ENCODE measurements at regions of chr1 and their contacts with region 1.

Region 1: GRCh38 chr1:26602378-26602959 is 72.9 kb downstream of the RPS6KA1 start:
- DNase-seq: no peak
- ATAC-seq: peak; percentile 64
- H3K4me3 ChIP-seq: no peak overlapping the region
- H3K27ac ChIP-seq: no peak overlapping the region
- H3K4me1 ChIP-seq: peaks cover 10% of the 10 kb centered on the region
- H3K27me3 ChIP-seq: no peaks in the 10 kb centered on the region
- CTCF ChIP-seq: peak; percentile 77 to 86 (median 79)
- EP300 ChIP-seq: no peak
- POLR2A ChIP-seq: no peak
- RAD21 ChIP-seq: peak; percentile 99

Region 2: DNA sequence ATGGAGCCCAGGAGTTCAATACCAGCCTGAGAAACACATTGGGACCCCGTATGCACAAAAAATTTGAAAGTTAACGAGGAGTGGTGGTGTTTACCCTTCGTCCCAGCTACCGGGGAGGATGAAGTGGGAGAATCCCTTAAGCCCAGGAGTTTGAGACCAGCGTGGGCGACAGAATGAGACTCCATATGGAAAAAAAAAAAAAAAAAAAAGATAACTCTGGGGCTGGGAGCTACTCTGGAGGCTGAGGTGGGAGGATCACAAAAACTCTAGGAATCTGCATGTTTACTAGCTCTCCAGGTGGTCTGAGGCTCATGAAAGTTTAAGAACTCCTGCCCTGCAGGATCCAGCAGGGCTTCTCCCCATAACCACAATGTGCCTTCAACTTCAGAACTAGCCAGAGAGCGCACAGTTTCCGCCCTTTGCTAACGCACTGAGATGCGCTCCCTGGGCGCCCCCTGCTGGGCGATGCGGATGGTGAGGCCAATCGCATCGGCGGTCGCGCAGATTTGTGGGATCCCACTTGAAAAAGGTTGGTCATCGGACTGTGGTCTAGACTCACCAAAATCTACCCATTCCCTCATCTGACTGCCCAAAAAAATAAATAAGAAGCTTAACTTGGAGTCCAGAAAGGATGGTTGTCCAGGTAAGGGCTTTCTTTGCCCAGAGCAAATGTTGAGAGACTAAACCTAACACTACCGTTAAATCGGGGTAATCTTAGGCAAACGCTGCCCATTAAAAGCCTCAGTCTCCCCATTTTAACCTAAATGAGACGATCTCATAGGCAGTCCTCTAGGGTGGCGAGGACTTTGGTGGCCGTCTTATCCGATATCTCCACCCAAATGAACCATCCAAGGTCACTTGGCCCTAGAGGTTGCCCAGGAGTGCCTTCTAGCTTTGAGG is 238.7 kb before region 1 on chr1:
- CTCF ChIA-PET with region 1: no interaction called
- POLR2A ChIA-PET with region 1: no interaction called
- RAD21 ChIA-PET with region 1: no interaction called
- SMC1A ChIA-PET with region 1: no interaction called
- in situ Hi-C with region 1: no loop called
- intact Hi-C with region 1: no loop called
- DNase-seq: peak; percentile 16
- ATAC-seq: peak; percentile 91
- H3K4me3 ChIP-seq: no peak overlapping the region
- H3K27ac ChIP-seq: no peak overlapping the region
- H3K4me1 ChIP-seq: no peaks in the 10 kb centered on the region; the same call in 1 of the 2 replicates
- H3K27me3 ChIP-seq: peaks cover 3 to 5% of the 10 kb centered on the region in 2 experiments; a peak in 3 of 4 replicates
- CTCF ChIP-seq: peak; percentile 85 to 98 (median 98)
- EP300 ChIP-seq: no peak
- POLR2A ChIP-seq: no peak
- RAD21 ChIP-seq: peak; percentile 81

Region 3: DNA sequence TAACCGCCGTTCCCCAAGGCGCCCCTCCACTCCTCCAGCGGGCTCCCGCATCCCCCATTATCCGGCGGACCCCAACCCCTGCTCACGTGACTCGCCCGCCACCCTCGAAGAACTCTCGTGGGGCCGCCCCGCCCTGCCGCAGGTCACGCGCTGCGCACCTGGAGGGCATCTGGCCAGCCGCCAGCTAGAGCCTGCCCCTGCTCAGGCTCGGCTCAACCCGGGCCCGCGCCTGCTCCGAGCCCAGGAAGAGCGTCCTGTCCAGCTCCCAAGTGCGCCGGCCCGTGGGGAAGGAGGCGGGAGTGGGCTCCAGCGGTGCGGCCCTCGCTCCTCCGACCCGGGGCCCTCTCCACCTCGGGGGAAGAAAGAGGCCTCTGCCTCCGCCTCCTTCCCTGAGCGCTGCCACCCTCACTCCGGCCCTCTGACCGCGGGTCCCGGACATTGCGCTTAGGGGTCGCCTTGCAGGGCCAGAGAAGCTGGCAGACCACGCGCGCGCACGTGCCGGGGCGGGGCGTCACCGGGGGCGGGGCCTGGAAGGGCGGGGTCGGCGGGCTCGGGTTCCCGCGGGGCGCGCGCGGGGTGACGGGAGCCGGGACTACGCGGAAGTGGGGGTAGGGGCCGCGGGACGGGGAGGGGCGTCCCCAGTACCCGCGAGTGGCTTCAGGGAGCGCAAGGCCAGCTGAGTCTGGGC is 101.8 kb before region 1 on chr1:
- CTCF ChIA-PET with region 1: interaction called, 58 read pairs
- POLR2A ChIA-PET with region 1: interaction called, 5 read pairs
- RAD21 ChIA-PET with region 1: interaction called, 33 read pairs
- SMC1A ChIA-PET with region 1: interaction called, 17 read pairs
- in situ Hi-C with region 1: no loop called
- intact Hi-C with region 1: loop called (anchors 2 kb)
- DNase-seq: peak; percentile 39
- ATAC-seq: peak; percentile 86
- H3K4me3 ChIP-seq: peak overlapping the region; percentile 89
- H3K27ac ChIP-seq: peak overlapping the region; percentile 95
- H3K4me1 ChIP-seq: peaks cover 14% of the 10 kb centered on the region
- H3K27me3 ChIP-seq: no peaks in the 10 kb centered on the region
- CTCF ChIP-seq: no peak
- EP300 ChIP-seq: peak in 1 of 2 experiments; percentile 36; a peak in 1 of 4 replicates
- POLR2A ChIP-seq: peak; percentile 97
- RAD21 ChIP-seq: no peak

Region 4: DNA sequence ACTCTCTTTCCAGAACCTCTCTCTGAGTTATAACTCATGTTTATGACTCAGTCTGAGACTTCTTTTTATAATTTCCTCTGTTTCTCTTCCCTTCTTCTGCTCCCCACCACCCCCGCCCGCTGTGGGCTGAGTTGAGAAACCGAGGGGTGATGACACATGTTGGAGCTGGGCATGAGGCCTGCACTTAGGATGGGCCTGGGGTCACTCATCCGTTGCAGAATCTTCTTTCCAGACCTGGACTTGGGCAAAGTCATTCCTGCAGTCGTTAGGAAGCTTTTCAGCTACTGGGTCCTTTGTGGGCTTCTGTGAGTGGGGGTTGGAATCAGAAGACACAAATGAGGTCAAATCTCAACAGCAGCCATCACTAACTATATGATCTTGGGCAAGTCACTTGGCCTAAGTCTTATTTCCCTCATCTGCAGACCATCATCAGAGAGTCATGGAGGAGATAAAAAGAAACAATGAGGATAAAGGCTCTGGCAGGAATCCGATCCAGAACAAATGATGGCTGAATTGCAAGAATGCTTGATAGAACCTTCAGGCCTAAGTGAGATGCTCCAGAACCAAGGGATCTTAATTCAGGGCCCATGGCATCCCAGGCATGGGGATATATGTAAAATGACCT is 19.5 kb before region 1 on chr1:
- CTCF ChIA-PET with region 1: interaction called, 13 read pairs
- POLR2A ChIA-PET with region 1: interaction called, 3 read pairs
- RAD21 ChIA-PET with region 1: interaction called, 9 read pairs
- SMC1A ChIA-PET with region 1: interaction called, 7 read pairs
- in situ Hi-C with region 1: no loop called
- intact Hi-C with region 1: no loop called
- DNase-seq: peak; percentile 56
- ATAC-seq: peak; percentile 67
- H3K4me3 ChIP-seq: no peak overlapping the region
- H3K27ac ChIP-seq: peak overlapping the region; percentile 87
- H3K4me1 ChIP-seq: peaks cover 56% of the 10 kb centered on the region
- H3K27me3 ChIP-seq: no peaks in the 10 kb centered on the region
- CTCF ChIP-seq: no peak
- EP300 ChIP-seq: peak in 1 of 2 experiments; percentile 70; a peak in 1 of 4 replicates
- POLR2A ChIP-seq: no peak
- RAD21 ChIP-seq: no peak

Region 5: DNA sequence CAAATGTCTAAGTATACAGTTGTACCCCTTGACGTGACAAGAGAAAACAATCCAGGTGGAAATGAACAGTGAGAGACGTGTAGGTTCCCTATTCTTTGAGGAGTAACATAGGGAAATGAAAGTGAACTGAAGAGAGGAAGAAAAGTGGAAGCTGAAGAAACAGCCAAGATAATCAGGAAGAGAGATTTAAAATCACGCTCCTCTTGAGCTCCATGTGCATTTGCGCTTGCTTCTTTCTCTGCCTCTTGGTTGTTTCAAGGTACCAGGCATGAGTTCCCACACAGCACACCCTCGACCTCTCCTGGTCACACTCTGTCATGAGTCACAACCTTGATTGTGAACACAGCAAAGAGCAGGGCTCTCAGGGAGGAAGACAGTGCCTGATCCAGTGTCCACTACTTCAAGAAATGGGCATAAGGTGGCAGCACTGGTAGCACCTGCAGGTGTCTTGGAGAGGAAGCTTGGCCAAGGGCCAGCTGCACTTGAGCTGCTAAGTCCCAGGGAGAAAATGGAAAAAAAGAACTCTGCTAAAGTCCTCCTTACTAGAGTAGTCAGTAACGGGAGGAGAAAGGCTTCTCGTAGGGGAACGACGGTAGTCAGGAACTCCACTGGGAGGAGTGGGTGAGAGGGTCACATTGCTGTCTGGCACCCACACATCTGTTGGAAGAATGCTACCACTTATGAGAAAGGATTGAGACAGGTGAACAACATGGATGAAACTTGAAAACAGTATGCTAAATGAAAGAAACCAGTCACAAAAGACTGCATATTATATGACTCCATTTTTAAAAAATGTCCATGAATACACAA is 75.0 kb after region 1 on chr1:
- CTCF ChIA-PET with region 1: interaction called, 83 read pairs
- POLR2A ChIA-PET with region 1: interaction called, 5 read pairs
- RAD21 ChIA-PET with region 1: interaction called, 47 read pairs
- SMC1A ChIA-PET with region 1: interaction called, 72 read pairs
- in situ Hi-C with region 1: no loop called
- intact Hi-C with region 1: loop called (anchors 1 kb)
- DNase-seq: peak; percentile 87
- ATAC-seq: peak; percentile 99
- H3K4me3 ChIP-seq: no peak overlapping the region
- H3K27ac ChIP-seq: peak overlapping the region; percentile 11; the same call in 1 of the 2 replicates
- H3K4me1 ChIP-seq: peaks cover 10% of the 10 kb centered on the region
- H3K27me3 ChIP-seq: no peaks in the 10 kb centered on the region
- CTCF ChIP-seq: peak; percentile 71 to 84 (median 73)
- EP300 ChIP-seq: no peak
- POLR2A ChIP-seq: no peak
- RAD21 ChIP-seq: peak; percentile 84

Region 6: DNA sequence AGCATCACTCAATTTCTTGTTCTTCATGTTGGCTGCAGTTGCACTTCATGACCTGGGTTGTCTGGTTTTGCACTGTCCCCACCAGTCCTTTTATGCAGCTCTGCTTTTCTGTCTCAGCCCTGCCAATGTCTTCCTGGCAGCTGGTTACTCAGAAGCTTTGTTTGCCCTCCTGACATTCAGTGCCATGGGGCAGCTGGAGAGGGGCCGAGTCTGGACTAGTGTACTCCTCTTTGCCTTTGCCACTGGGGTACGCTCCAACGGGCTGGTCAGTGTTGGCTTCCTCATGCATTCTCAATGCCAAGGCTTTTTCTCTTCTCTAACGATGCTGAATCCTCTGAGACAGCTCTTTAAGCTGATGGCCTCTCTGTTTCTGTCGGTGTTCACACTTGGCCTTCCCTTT is 191.9 kb after region 1 on chr1:
- CTCF ChIA-PET with region 1: interaction called, 450 read pairs
- POLR2A ChIA-PET with region 1: interaction called, 47 read pairs
- RAD21 ChIA-PET with region 1: interaction called, 262 read pairs
- SMC1A ChIA-PET with region 1: interaction called, 268 read pairs
- in situ Hi-C with region 1: loop called (anchors 5 kb)
- intact Hi-C with region 1: loop called (anchors 1 kb)
- DNase-seq: no peak
- ATAC-seq: no peak
- H3K4me3 ChIP-seq: no peak overlapping the region
- H3K27ac ChIP-seq: no peak overlapping the region
- H3K4me1 ChIP-seq: peaks cover 19% of the 10 kb centered on the region
- H3K27me3 ChIP-seq: no peaks in the 10 kb centered on the region
- CTCF ChIP-seq: no peak
- EP300 ChIP-seq: no peak
- POLR2A ChIP-seq: no peak
- RAD21 ChIP-seq: no peak

Region 7: GRCh38 chr1:26820784-26821269 is 218.4 kb after region 1 on chr1:
- CTCF ChIA-PET with region 1: interaction called, 8 read pairs
- POLR2A ChIA-PET with region 1: no interaction called
- RAD21 ChIA-PET with region 1: interaction called, 5 read pairs
- SMC1A ChIA-PET with region 1: interaction called, 12 read pairs
- in situ Hi-C with region 1: no loop called
- intact Hi-C with region 1: no loop called
- DNase-seq: peak; percentile 77
- ATAC-seq: peak; percentile 100
- H3K4me3 ChIP-seq: no peak overlapping the region
- H3K27ac ChIP-seq: peak overlapping the region; percentile 23
- H3K4me1 ChIP-seq: peaks cover 11% of the 10 kb centered on the region
- H3K27me3 ChIP-seq: no peaks in the 10 kb centered on the region
- CTCF ChIP-seq: peak; percentile 65 to 68 (median 67)
- EP300 ChIP-seq: peak in 1 of 2 experiments; percentile 45; a peak in 1 of 4 replicates
- POLR2A ChIP-seq: no peak
- RAD21 ChIP-seq: peak; percentile 42

Region 8: GRCh38 chr1:27087371-27088220 is 485.1 kb after region 1 on chr1:
- CTCF ChIA-PET with region 1: no interaction called
- POLR2A ChIA-PET with region 1: no interaction called
- RAD21 ChIA-PET with region 1: no interaction called
- SMC1A ChIA-PET with region 1: no interaction called
- in situ Hi-C with region 1: no loop called
- intact Hi-C with region 1: no loop called
- DNase-seq: no peak
- ATAC-seq: no peak
- H3K4me3 ChIP-seq: no peak overlapping the region
- H3K27ac ChIP-seq: no peak overlapping the region
- H3K4me1 ChIP-seq: no peaks in the 10 kb centered on the region
- H3K27me3 ChIP-seq: 0 out of 4 replicates have a peak, but pooled peaks cover 0 to 2% of the 10 kb centered on the region in 2 experiments
- CTCF ChIP-seq: no peak
- EP300 ChIP-seq: no peak
- POLR2A ChIP-seq: no peak
- RAD21 ChIP-seq: no peak

Measured in GM12878 (cell line).